MCF 10A (cell line): ENCODE measurements at regions of chrX and their contacts with region 1.

Region 1: DNA sequence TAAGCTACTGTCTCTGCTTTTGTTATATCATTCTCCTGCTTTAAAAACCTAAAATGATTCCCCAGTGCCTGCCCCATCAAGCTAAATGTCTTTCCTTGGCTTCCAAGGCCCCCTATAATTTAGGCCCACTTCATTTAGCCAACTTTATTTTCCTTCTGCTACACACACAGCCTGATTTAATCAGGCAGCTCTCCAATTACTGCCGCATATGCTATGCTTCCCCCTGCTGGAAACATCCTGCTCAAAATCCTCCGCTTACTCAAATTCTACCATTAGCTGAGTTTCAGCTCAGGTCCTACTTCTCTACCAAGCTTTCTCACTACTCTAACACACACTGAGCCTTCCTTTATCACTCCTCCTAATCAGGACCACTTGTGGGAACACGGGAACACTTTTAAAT is 17.0 kb downstream of the LAMP2 start:
- DNase-seq: peak; percentile 38
- H3K4me3 Mint-ChIP-seq: no peak overlapping the region
- H3K27ac Mint-ChIP-seq: no peak overlapping the region
- H3K4me1 Mint-ChIP-seq: peaks cover 6% of the 10 kb centered on the region
- H3K27me3 Mint-ChIP-seq: no peaks in the 10 kb centered on the region
- CTCF ChIP-seq: peak; percentile 27

Region 2: DNA sequence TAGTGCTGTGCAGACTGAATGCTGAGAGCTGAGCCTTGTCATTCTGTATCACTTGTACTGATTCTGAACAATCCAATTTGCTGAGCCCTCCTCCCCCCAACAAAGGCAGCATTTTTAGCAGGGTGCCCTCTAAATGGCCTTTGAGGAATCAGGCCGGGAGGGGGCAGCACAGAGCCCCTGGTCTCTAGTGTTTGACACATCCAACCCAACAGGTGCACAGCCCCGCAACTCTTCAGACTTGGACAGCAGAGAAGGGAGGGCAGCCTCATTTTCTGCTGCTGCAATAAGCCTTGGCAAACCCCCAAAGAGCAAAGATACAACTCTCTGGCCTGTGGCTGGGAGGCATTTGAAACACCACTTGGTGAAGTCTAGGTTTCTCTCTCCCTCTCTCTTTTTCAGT is 86.8 kb before region 1 on chrX:
- CTCF ChIA-PET with region 1: no interaction called
- POLR2A ChIA-PET with region 1: no interaction called
- intact Hi-C with region 1: loop called (anchors 1 kb)
- DNase-seq: peak; percentile 52
- H3K4me3 Mint-ChIP-seq: no peak overlapping the region
- H3K27ac Mint-ChIP-seq: no peak overlapping the region
- H3K4me1 Mint-ChIP-seq: no peaks in the 10 kb centered on the region
- H3K27me3 Mint-ChIP-seq: peaks cover 25% of the 10 kb centered on the region
- CTCF ChIP-seq: peak; percentile 42

Region 3: GRCh38 chrX:120380699-120381098 is 71.4 kb before region 1 on chrX:
- CTCF ChIA-PET with region 1: interaction called, 13 read pairs
- POLR2A ChIA-PET with region 1: no interaction called
- intact Hi-C with region 1: no loop called
- DNase-seq: peak; percentile 68
- H3K4me3 Mint-ChIP-seq: no peak overlapping the region
- H3K27ac Mint-ChIP-seq: no peak overlapping the region
- H3K4me1 Mint-ChIP-seq: no peaks in the 10 kb centered on the region
- H3K27me3 Mint-ChIP-seq: peaks cover 51% of the 10 kb centered on the region
- CTCF ChIP-seq: peak; percentile 42

Region 4: GRCh38 chrX:120439921-120440320 is 12.2 kb before region 1 on chrX:
- CTCF ChIA-PET with region 1: interaction called, 11 read pairs
- POLR2A ChIA-PET with region 1: interaction called, 16 read pairs
- intact Hi-C with region 1: no loop called
- DNase-seq: no peak
- H3K4me3 Mint-ChIP-seq: no peak overlapping the region
- H3K27ac Mint-ChIP-seq: no peak overlapping the region
- H3K4me1 Mint-ChIP-seq: no peaks in the 10 kb centered on the region
- H3K27me3 Mint-ChIP-seq: peaks cover 37% of the 10 kb centered on the region
- CTCF ChIP-seq: no peak

Region 5: DNA sequence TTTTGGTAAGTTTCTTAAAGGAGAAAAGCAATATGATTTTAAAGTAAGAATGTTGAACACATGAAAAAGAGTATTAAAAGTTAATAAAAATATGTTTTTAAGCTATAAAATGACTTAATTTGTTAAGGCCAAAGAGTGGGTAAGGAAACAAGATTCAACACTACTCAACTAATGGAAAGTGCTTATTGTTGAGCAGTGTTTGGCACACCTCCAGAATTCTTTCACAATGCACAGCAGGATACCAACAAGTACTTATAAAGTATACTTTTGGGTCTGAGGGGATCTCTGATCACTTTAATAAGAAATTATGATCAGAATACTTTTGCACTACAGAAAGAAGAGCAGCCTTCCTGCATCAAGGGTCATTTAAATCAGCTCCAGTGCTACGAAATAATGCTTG is 11.1 kb after region 1 on chrX:
- CTCF ChIA-PET with region 1: interaction called, 13 read pairs
- POLR2A ChIA-PET with region 1: interaction called, 66 read pairs
- intact Hi-C with region 1: no loop called
- DNase-seq: peak; percentile 80
- H3K4me3 Mint-ChIP-seq: no peak overlapping the region
- H3K27ac Mint-ChIP-seq: peak overlapping the region; percentile 42
- H3K4me1 Mint-ChIP-seq: peaks cover 36% of the 10 kb centered on the region
- H3K27me3 Mint-ChIP-seq: no peaks in the 10 kb centered on the region
- CTCF ChIP-seq: no peak

Region 6: DNA sequence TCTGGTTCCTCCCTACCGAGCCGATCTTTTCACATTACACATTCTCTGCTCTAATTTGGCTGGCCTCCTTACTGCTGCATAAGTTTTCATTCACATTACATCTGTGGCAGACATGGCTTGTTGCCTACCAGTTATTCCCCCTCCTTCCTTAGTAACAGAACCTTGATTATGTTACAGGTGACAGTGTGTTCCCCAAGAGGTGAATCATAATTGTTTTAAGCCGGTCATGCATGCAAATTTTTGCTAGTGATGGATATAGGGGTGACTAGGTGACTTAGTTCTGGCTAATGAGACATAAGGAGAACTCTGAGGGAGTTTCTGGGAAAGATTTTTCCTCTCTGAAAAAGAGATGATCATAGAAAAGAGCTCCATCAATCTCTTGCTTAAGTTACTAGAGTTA is 25.3 kb after region 1 on chrX:
- CTCF ChIA-PET with region 1: interaction called, 10 read pairs
- POLR2A ChIA-PET with region 1: no interaction called
- intact Hi-C with region 1: no loop called
- DNase-seq: no peak
- H3K4me3 Mint-ChIP-seq: no peak overlapping the region
- H3K27ac Mint-ChIP-seq: no peak overlapping the region
- H3K4me1 Mint-ChIP-seq: no peaks in the 10 kb centered on the region
- H3K27me3 Mint-ChIP-seq: peaks cover 13% of the 10 kb centered on the region
- CTCF ChIP-seq: no peak

Region 7: GRCh38 chrX:122363112-122363984 is 1911.2 kb after region 1 on chrX:
- CTCF ChIA-PET with region 1: no interaction called
- POLR2A ChIA-PET with region 1: no interaction called
- intact Hi-C with region 1: no loop called
- DNase-seq: peak; percentile 36
- H3K4me3 Mint-ChIP-seq: no peak overlapping the region
- H3K27ac Mint-ChIP-seq: no peak overlapping the region
- H3K4me1 Mint-ChIP-seq: no peaks in the 10 kb centered on the region
- H3K27me3 Mint-ChIP-seq: no peaks in the 10 kb centered on the region
- CTCF ChIP-seq: no peak